H1 (cell line): ENCODE measurements at regions of chr19 and their contacts with region 1.

Region 1: DNA sequence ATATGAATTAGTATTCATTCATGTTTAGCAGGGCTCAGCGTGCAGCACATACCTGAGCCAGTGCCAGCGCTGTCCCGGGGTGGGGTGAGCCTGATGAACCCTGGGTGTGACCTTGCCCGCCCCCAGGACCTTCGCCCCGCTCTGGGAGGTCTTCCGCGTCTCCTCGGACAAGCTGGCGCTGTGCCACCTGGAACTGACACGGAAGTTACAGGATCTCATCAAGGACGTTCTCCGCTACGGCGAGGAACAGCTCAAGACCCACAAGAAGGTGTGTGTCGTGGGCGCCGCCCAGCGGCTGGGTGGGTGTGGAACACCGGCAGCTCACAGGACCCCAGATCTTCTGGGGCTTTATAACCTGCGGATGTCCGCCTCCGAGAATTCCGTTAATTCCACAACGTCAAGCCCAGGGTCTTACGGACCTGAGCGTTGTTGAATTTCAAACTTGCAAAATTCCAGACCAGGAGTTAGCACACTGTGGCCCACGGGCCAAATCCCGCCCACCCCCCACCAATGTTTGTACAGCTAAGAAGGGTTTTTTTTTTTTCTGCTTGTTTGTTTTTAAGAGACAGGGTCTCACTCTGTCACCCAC is 15.4 kb downstream of the FCHO1 start:
- DNase-seq: peak; percentile 82 to 94
- H3K4me3 ChIP-seq: no peak overlapping the region
- H3K27ac ChIP-seq: no peak overlapping the region
- H3K4me1 ChIP-seq: peaks cover 0 to 2% (median 0%) of the 10 kb centered on the region in 4 experiments; a peak in 3 of 7 replicates
- H3K27me3 ChIP-seq: no peaks in the 10 kb centered on the region
- CTCF ChIP-seq: peak; percentile 94 to 97 (median 95)
- EP300 ChIP-seq: no peak
- POLR2A ChIP-seq: no peak
- RAD21 ChIP-seq: peak; percentile 96 to 97

Region 2: GRCh38 chr19:17718947-17719711 is 47.5 kb before region 1 on chr19 and contains the start of gene MAP1S:
- CTCF ChIA-PET with region 1: interaction called, 39 read pairs
- POLR2A ChIA-PET with region 1: interaction called, 6 read pairs
- DNase-seq: peak; percentile 50 to 91
- H3K4me3 ChIP-seq: peak within 1 kb of the TSS; percentile 75 to 100 (median 83)
- H3K27ac ChIP-seq: no peak within 1 kb of the TSS; the same call in 1 of the 2 replicates
- H3K4me1 ChIP-seq: peaks cover 4 to 13% (median 6%) of the 10 kb centered on the region in 4 experiments
- H3K27me3 ChIP-seq: no peaks in the 10 kb centered on the region
- CTCF ChIP-seq: no peak
- EP300 ChIP-seq: no peak
- POLR2A ChIP-seq: peak in 1 of 2 experiments; percentile 89; a peak in 2 of 3 replicates
- RAD21 ChIP-seq: no peak
- total RNA-seq, gene MAP1S: 115 and 116 TPM in 2 replicates

Region 3: DNA sequence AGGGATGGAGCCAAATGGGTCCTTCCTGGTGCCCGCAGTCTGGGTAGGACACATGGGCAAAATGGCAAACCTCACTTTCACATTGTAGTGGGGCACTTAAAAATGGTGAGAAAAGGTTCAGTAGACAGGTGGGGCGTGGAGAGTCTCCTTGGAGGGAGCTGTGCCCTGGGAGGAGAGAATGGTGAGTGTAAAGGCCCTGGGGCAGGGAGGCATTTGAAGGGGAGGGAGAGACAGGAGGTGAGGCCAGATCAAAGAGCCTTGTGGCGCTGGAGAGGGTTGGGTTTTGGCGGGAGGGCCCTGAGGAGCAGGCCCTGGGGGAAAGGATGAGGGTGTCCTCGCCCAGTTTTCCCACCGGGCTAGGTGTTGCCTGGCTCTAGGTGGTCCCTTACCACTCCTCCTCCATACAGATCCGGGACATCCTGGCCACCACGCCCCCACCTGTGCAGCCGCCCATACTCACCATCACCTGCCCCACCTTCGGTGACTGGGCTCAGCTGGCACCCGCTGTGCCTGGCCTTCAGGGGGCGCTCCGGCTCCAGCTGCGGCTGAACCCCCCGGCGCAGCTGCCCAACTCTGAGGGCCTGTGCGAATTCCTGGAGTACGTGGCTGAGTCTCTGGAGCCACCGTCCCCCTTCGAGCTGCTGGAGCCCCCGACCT is 41.1 kb before region 1 on chr19:
- CTCF ChIA-PET with region 1: interaction called, 39 read pairs
- POLR2A ChIA-PET with region 1: interaction called, 6 read pairs
- DNase-seq: peak in 1 of 2 experiments; percentile 86
- H3K4me3 ChIP-seq: no peak overlapping the region
- H3K27ac ChIP-seq: no peak overlapping the region
- H3K4me1 ChIP-seq: peaks cover 0 to 1% (median under 1%) of the 10 kb centered on the region in 4 experiments; a peak in 3 of 7 replicates
- H3K27me3 ChIP-seq: no peaks in the 10 kb centered on the region
- CTCF ChIP-seq: peak; percentile 85 to 89 (median 89)
- EP300 ChIP-seq: no peak
- POLR2A ChIP-seq: no peak
- RAD21 ChIP-seq: peak; percentile 73 to 88

Region 4: GRCh38 chr19:17755977-17756670 is 10.5 kb before region 1 on chr19:
- CTCF ChIA-PET with region 1: interaction called, 23 read pairs
- POLR2A ChIA-PET with region 1: interaction called, 9 read pairs
- DNase-seq: peak in 1 of 2 experiments; percentile 89
- H3K4me3 ChIP-seq: no peak overlapping the region
- H3K27ac ChIP-seq: no peak overlapping the region; the same call in 1 of the 2 replicates
- H3K4me1 ChIP-seq: peaks cover 0 to 9% (median 0%) of the 10 kb centered on the region in 4 experiments; a peak in 1 of 7 replicates
- H3K27me3 ChIP-seq: no peaks in the 10 kb centered on the region
- CTCF ChIP-seq: no peak
- EP300 ChIP-seq: no peak
- POLR2A ChIP-seq: no peak
- RAD21 ChIP-seq: no peak

Region 5: DNA sequence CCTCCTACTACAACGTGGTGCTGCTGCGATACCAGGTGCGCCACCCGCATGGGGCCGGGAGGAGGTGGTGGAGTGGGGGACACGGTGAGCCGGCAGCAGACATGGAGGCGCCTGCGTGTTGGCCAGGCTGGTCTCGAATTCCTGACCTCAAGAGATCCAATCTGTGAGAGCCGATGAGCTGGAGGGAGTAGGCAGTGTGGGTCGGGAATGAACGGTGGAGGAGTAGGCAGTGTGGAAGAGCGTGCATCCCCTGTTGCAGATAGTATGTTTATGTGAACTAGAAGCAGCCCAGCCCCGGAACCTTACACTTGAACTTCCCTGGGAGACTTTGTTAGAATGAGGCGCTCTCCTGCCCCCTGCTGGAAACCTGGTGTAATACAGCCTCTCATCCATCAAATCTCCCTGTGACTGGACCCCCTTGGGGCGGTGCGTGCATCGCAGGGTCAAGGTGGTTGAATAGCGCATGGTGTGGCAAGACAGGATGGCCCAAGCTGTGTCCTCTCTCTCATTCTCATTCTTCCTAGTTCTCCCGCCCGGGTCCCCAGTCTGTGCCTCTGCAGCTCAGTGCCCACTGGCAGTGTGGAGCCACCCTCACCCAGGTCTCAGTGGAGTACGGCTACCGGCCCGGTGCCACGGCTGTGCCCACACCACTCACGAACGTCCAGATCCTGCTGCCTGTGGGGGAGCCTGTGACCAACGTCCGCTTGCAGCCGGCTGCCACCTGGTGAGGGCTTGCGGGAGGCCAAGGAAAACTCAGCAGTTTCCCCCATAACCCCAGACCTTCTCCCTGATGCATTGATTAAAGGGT is 17.8 kb after region 1 on chr19:
- CTCF ChIA-PET with region 1: interaction called, 12 read pairs
- POLR2A ChIA-PET with region 1: interaction called, 3 read pairs
- DNase-seq: peak in 1 of 2 experiments; percentile 96
- H3K4me3 ChIP-seq: no peak overlapping the region
- H3K27ac ChIP-seq: no peak overlapping the region
- H3K4me1 ChIP-seq: peaks cover 0 to 4% (median 3%) of the 10 kb centered on the region in 4 experiments; a peak in 4 of 7 replicates
- H3K27me3 ChIP-seq: no peaks in the 10 kb centered on the region
- CTCF ChIP-seq: peak; percentile 66 to 89 (median 87)
- EP300 ChIP-seq: no peak
- POLR2A ChIP-seq: no peak
- RAD21 ChIP-seq: peak; percentile 66 to 77